ENCODE measurements at regions of chr14 and their contacts with region 1.

Region 1: DNA sequence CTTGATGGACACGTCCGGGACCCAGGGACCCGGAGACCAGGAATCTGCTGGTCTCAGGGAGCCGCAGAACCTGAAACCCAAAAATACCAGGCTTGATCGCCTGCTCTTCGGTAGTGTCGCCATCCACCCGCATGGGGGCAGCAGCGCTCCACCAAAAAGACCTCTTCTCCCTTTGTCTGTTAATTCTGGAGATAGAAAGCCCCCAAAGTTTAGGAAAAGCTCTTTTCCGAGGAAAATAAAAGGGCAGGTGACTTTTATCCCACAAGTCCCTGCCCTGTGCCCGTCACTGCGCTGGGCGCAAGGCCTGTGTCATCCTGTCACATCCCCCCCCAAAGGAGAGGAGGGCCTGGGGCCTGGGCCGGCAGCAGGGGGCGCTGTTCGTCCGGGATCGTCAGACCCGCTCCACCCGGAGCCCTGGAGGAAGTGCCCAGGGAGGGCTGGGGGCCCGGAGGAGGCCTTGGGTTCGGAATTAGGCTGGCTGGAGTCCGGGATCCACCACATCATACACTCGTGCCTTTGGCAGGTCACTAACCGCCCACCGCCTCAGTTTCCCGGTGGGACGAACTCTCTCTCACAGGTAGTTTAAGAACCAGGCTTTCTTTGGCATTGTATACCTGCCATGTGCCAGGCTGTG is 31.9 kb downstream of the DAD1 start:
- DNase-seq: peak; percentile 80 to 88 (median 82)
- ATAC-seq: peak; percentile 88
- H3K4me3 ChIP-seq: 0 out of 2 replicates have a peak overlapping the region, but pooled peaks have one; percentile 21
- H3K27ac ChIP-seq: peak overlapping the region; percentile 71
- H3K4me1 ChIP-seq: peaks cover 32 to 42% of the 10 kb centered on the region in 2 experiments
- H3K27me3 ChIP-seq: no peaks in the 10 kb centered on the region
- CTCF ChIP-seq: peak; percentile 75 to 98 (median 90); a peak in 5 of 6 replicates
- EP300 ChIP-seq: no peak
- POLR2A ChIP-seq: no peak
- RAD21 ChIP-seq: peak; percentile 93 to 96

Region 2: DNA sequence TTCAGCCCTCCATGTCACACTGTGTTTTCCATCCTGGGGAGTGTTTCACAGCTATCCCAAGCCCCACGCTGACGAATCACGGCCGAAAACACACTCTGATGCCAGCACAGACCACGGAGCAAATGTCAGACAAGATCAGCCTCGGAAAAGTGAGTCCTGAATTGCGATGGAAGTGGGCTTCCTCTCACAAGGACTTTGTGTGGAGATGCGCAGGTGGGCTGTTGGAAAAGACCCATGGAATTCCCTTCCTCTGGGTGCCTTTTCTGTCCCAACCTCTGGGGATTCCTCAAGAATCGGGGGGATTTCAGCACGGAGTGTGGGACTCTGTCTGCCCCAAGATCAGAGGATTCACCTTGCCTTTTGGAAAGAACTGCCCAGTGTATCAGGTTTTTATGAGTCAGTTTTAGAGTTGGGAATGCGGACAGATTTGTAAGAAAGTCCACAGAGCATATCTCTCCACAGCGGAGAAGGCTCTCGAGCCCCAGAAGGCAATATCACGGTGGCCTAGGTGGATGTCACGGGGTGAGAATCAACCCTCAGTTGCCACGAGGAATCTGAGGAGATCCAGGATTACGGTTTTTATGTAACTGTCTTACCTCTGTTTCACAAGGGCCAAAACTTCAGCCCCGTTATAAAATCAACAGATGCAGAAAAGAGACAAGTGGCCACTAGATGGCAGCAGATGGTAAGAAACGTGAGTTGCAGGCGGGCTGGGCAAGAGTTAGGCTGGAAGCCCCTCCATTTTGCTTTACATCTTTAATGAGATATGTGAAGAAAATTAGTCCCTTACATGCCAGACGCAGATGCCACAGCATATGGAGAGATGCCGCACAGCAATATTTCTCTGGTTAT is 170.0 kb before region 1 on chr14:
- CTCF ChIA-PET with region 1: interaction called, 4 read pairs
- POLR2A ChIA-PET with region 1: no interaction called
- in situ Hi-C with region 1: loop called (anchors 10 kb)
- intact Hi-C with region 1: loop called (anchors 10 kb)
- DNase-seq: peak; percentile 55 to 78 (median 60)
- ATAC-seq: peak; percentile 77
- H3K4me3 ChIP-seq: no peak overlapping the region
- H3K27ac ChIP-seq: no peak overlapping the region
- H3K4me1 ChIP-seq: no peaks in the 10 kb centered on the region
- H3K27me3 ChIP-seq: peaks cover 8 to 19% of the 10 kb centered on the region in 2 experiments; a peak in 3 of 5 replicates
- CTCF ChIP-seq: peak; percentile 66 to 77 (median 69)
- EP300 ChIP-seq: no peak
- POLR2A ChIP-seq: no peak
- RAD21 ChIP-seq: peak; percentile 70 to 85

Region 3: DNA sequence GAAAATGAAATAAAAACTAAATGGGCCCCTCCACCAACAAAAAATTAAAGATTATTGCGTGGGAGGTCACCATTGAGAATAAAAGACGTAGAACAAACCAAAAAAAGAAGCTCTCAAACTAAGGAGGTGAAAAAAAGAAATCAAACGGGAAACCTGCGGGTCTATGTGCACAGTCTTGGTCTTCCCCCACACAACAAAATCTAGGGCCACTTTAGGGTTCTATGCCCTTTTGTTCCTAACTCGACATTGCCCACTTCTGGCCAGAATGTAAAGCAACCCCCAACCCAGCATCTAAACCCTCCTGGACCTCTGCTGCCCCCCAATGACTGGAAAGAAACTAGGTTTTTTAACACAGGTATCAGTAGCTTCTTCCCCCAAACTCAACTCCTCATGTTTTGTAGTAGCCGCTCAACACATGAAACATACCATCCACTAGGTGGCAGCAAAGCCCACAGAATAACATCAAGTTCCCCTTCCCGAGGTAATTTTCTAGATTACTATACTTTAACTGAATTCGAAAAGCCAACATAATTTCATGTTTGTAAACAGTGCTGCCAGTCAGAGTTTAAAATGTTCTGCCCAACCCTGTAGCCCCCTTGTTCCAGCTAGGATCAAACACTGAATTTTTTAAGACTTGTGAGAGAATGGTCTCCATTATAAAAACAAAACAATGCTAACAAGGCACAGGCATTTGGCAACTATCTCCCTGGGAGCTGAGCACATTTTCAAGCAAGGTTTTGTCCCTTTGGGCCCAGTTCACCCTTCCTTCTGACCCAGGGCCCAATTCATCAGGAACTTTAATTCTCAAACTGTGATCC is 13.2 kb after region 1 on chr14:
- CTCF ChIA-PET with region 1: interaction called, 16 read pairs
- POLR2A ChIA-PET with region 1: interaction called, 4 read pairs
- in situ Hi-C with region 1: no loop called
- intact Hi-C with region 1: loop called (anchors 1 kb)
- DNase-seq: peak; percentile 71 to 89 (median 76)
- ATAC-seq: peak; percentile 95
- H3K4me3 ChIP-seq: no peak overlapping the region
- H3K27ac ChIP-seq: no peak overlapping the region
- H3K4me1 ChIP-seq: no peaks in the 10 kb centered on the region
- H3K27me3 ChIP-seq: no peaks in the 10 kb centered on the region
- CTCF ChIP-seq: peak; percentile 77 to 99 (median 95)
- EP300 ChIP-seq: no peak
- POLR2A ChIP-seq: no peak
- RAD21 ChIP-seq: peak; percentile 86 to 91

Region 4: DNA sequence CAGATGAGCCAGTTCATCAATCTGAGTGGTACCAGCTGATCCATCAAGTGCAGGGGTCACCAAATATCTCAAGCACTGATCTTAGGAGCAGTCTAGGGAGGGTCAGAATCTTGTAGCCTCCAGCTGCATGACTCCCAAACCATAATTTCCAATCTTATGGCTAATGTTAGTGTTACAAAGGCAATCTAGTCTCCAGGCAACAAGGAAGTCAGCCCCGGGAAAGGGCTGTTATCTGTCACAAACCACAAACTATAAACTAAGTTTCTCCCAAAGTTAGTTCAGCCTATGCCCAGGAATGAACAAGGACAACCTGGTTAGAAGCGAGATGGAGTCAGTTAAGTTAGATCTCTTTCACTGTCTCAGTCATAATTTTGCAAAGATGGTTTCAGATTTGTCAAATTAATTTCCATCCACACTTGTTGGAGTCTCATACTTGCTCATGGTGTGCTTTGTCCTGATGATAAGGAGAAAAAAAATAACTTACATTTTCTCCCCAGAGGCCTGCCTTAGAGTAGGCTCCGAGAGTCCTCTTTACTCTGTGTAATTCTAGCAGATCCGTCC is 37.1 kb after region 1 on chr14:
- CTCF ChIA-PET with region 1: no interaction called
- POLR2A ChIA-PET with region 1: no interaction called
- in situ Hi-C with region 1: no loop called
- intact Hi-C with region 1: no loop called
- DNase-seq: peak in 1 of 4 experiments; percentile 36
- ATAC-seq: no peak
- H3K4me3 ChIP-seq: no peak overlapping the region
- H3K27ac ChIP-seq: peak overlapping the region; percentile 19; the same call in 1 of the 3 replicates
- H3K4me1 ChIP-seq: peaks cover 23 to 46% of the 10 kb centered on the region in 2 experiments
- H3K27me3 ChIP-seq: no peaks in the 10 kb centered on the region
- CTCF ChIP-seq: no peak
- EP300 ChIP-seq: no peak
- POLR2A ChIP-seq: no peak
- RAD21 ChIP-seq: no peak

Region 5: GRCh38 chr14:22646570-22647254 is 89.6 kb after region 1 on chr14:
- CTCF ChIA-PET with region 1: interaction called, 58 read pairs
- POLR2A ChIA-PET with region 1: interaction called, 5 read pairs
- in situ Hi-C with region 1: no loop called
- intact Hi-C with region 1: loop called (anchors 2 kb)
- DNase-seq: no peak
- ATAC-seq: no peak
- H3K4me3 ChIP-seq: no peak overlapping the region
- H3K27ac ChIP-seq: no peak overlapping the region
- H3K4me1 ChIP-seq: peaks cover 0 to 3% of the 10 kb centered on the region in 2 experiments; a peak in 3 of 5 replicates
- H3K27me3 ChIP-seq: no peaks in the 10 kb centered on the region
- CTCF ChIP-seq: no peak
- EP300 ChIP-seq: no peak
- POLR2A ChIP-seq: no peak
- RAD21 ChIP-seq: no peak

Region 6: GRCh38 chr14:22900081-22900799 is 343.1 kb after region 1 on chr14:
- CTCF ChIA-PET with region 1: interaction called, 21 read pairs
- POLR2A ChIA-PET with region 1: no interaction called
- in situ Hi-C with region 1: no loop called
- intact Hi-C with region 1: no loop called
- DNase-seq: peak; percentile 71 to 91 (median 79)
- ATAC-seq: peak; percentile 80
- H3K4me3 ChIP-seq: no peak overlapping the region
- H3K27ac ChIP-seq: no peak overlapping the region
- H3K4me1 ChIP-seq: peaks cover 5 to 39% of the 10 kb centered on the region in 2 experiments; a peak in 2 of 5 replicates
- H3K27me3 ChIP-seq: no peaks in the 10 kb centered on the region
- CTCF ChIP-seq: peak; percentile 73 to 84 (median 83)
- EP300 ChIP-seq: no peak
- POLR2A ChIP-seq: no peak
- RAD21 ChIP-seq: peak; percentile 57 to 68

Measured in K562 (cell line).